CD8-positive, alpha-beta T cell (primary cell): ENCODE measurements at regions of chr6 and their contacts with region 1.

Region 1: DNA sequence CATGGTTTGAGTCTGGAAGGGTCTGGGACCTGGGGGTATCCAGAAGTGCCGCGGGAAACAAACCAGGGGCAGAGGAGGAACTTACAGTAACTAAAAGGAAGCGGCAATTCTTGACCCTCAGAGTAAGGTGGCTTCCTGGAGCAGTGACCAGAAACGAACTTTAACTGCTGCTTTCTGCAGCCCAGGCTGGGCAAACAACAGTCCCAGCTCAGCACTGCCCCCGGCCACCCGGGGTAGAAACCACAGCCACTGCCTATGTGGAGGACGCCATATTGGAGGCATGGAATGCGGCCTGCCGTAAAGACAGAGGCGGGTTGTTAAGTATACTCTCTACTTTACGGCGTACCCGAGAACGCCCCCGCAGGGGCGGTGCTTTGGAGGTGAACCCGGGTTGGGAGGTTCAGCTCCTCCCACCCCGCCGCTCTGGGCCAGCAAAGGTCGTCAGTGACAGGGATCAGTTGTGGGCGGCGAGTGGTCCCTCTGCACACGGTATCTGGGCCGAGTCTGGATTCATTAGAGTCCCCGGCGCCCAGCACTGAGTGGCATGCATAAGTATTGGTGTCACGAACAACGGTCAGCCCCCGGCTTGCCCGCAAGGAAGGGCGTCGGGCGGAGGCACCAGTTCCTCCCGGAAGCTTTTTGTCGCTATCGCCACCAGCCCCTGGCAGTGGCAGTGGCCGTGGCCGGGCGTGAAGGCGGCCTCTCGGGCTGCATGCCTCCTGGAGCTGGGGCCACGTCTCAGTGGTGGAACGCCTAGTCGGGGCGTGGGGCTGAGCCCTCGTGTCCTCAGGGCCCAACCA is at the start of gene PDSS2:
- DNase-seq: peak; percentile 93 to 99 (median 96)
- ATAC-seq: peak; percentile 96
- H3K4me3 ChIP-seq: peak within 1 kb of the TSS; percentile 93 to 94
- H3K4me3 Mint-ChIP-seq: peak within 1 kb of the TSS; percentile 98
- H3K27ac ChIP-seq: peak within 1 kb of the TSS; percentile 69 to 82
- H3K27ac Mint-ChIP-seq: peak within 1 kb of the TSS; percentile 98
- H3K4me1 ChIP-seq: peaks cover 14% of the 10 kb centered on the region
- H3K4me1 Mint-ChIP-seq: peaks cover 31% of the 10 kb centered on the region
- H3K27me3 ChIP-seq: no peaks in the 10 kb centered on the region
- H3K27me3 Mint-ChIP-seq: no peaks in the 10 kb centered on the region
- CTCF ChIP-seq: peak; percentile 28
- total RNA-seq, gene PDSS2: 3.7 to 4.7 TPM

Region 2: DNA sequence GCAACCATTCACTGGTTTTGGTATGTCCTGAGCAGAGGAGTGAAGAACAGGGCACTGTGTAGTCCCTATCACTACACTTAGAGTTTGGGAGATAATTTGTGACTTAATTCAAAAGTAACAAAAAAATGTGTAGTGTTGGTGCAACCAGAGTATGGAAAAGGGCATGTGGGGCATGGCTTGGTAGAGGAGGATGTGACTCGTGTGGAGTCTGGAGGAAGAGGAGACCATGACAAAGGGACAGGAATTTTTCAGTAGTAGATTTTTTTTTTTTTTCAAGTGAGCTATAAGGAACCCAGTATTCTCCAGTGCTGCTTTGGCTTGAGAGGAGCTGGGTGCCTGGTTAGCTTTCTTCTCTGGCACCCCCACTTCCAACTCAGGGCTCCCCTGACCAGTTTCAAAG is 426.4 kb before region 1 on chr6:
- CTCF ChIA-PET with region 1: no interaction called
- POLR2A ChIA-PET with region 1: no interaction called
- intact Hi-C with region 1: loop called (anchors 1 kb)
- DNase-seq: no peak
- ATAC-seq: no peak
- H3K4me3 ChIP-seq: no peak overlapping the region
- H3K4me3 Mint-ChIP-seq: no peak overlapping the region
- H3K27ac ChIP-seq: no peak overlapping the region
- H3K27ac Mint-ChIP-seq: no peak overlapping the region
- H3K4me1 ChIP-seq: peaks cover 10% of the 10 kb centered on the region
- H3K4me1 Mint-ChIP-seq: peaks cover 45% of the 10 kb centered on the region
- H3K27me3 ChIP-seq: no peaks in the 10 kb centered on the region
- H3K27me3 Mint-ChIP-seq: no peaks in the 10 kb centered on the region
- CTCF ChIP-seq: no peak

Region 3: GRCh38 chr6:107489636-107490565 is 30.4 kb after region 1 on chr6 and contains the start of gene SOBP:
- CTCF ChIA-PET with region 1: no interaction called
- POLR2A ChIA-PET with region 1: interaction called, 5 read pairs
- intact Hi-C with region 1: loop called (anchors 1 to 2 kb)
- DNase-seq: peak in 8 of 9 experiments; percentile 9 to 72 (median 56)
- ATAC-seq: peak; percentile 63
- H3K4me3 ChIP-seq: peak within 1 kb of the TSS; percentile 58 to 68
- H3K4me3 Mint-ChIP-seq: peak within 1 kb of the TSS; percentile 90
- H3K27ac ChIP-seq: no peak within 1 kb of the TSS
- H3K27ac Mint-ChIP-seq: no peak within 1 kb of the TSS
- H3K4me1 ChIP-seq: peaks cover 28% of the 10 kb centered on the region
- H3K4me1 Mint-ChIP-seq: peaks cover 18% of the 10 kb centered on the region
- H3K27me3 ChIP-seq: peaks cover 44 to 48% of the 10 kb centered on the region in 2 experiments
- H3K27me3 Mint-ChIP-seq: peaks cover 37% of the 10 kb centered on the region
- CTCF ChIP-seq: peak; percentile 16
- total RNA-seq, gene SOBP: 0.19 to 0.44 TPM

Region 4: DNA sequence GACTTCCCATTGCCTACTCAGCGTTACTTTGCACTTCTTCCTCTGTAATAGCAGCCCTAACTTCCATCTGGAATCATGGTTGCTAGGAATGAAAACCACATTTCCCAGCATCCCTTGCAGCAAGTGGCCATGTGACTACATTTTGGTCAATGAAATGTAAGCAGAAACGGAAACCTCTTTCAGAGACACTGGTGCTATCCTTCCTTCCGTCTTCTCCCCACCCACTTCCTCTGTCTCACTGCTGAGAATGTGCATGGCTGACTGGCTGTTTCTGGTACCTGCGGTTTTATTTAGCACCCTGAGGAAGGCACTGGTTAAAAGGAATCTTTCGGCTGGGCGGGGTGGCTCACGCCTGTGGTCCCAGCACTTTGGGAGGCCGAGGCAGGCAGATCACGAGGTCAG is 257.2 kb after region 1 on chr6:
- CTCF ChIA-PET with region 1: no interaction called
- POLR2A ChIA-PET with region 1: no interaction called
- intact Hi-C with region 1: loop called in 1 of 2 experiments (anchors 5 kb)
- DNase-seq: peak; percentile 46 to 95 (median 76)
- ATAC-seq: peak; percentile 85
- H3K4me3 ChIP-seq: no peak overlapping the region
- H3K4me3 Mint-ChIP-seq: peak overlapping the region; percentile 68
- H3K27ac ChIP-seq: peak overlapping the region in 1 of 2 experiments; percentile 79
- H3K27ac Mint-ChIP-seq: peak overlapping the region; percentile 91
- H3K4me1 ChIP-seq: peaks cover 54% of the 10 kb centered on the region
- H3K4me1 Mint-ChIP-seq: peaks cover 77% of the 10 kb centered on the region
- H3K27me3 ChIP-seq: no peaks in the 10 kb centered on the region
- H3K27me3 Mint-ChIP-seq: no peaks in the 10 kb centered on the region
- CTCF ChIP-seq: no peak

Region 5: GRCh38 chr6:108074359-108075144 is 615.1 kb after region 1 on chr6 and contains the start of gene OSTM1:
- CTCF ChIA-PET with region 1: no interaction called
- POLR2A ChIA-PET with region 1: no interaction called
- intact Hi-C with region 1: loop called (anchors 1 to 5 kb)
- DNase-seq: peak; percentile 89 to 97 (median 94)
- ATAC-seq: peak; percentile 96
- H3K4me3 ChIP-seq: peak within 1 kb of the TSS; percentile 98 to 99
- H3K4me3 Mint-ChIP-seq: peak within 1 kb of the TSS; percentile 89
- H3K27ac ChIP-seq: peak within 1 kb of the TSS; percentile 85 to 88
- H3K27ac Mint-ChIP-seq: peak within 1 kb of the TSS; percentile 88
- H3K4me1 ChIP-seq: peaks cover 19% of the 10 kb centered on the region
- H3K4me1 Mint-ChIP-seq: peaks cover 29% of the 10 kb centered on the region
- H3K27me3 ChIP-seq: no peaks in the 10 kb centered on the region
- H3K27me3 Mint-ChIP-seq: peaks cover 2% of the 10 kb centered on the region
- CTCF ChIP-seq: no peak
- total RNA-seq, gene OSTM1: 20.0 to 25.0 TPM

Region 6: GRCh38 chr6:108294727-108295625 is 835.5 kb after region 1 on chr6 and contains the start of gene AFG1L:
- CTCF ChIA-PET with region 1: no interaction called
- POLR2A ChIA-PET with region 1: interaction called, 3 read pairs
- intact Hi-C with region 1: loop called (anchors 2 to 5 kb)
- DNase-seq: peak; percentile 72 to 92 (median 86)
- ATAC-seq: peak; percentile 92
- H3K4me3 ChIP-seq: peak within 1 kb of the TSS; percentile 94 to 96
- H3K4me3 Mint-ChIP-seq: peak within 1 kb of the TSS; percentile 89
- H3K27ac ChIP-seq: peak within 1 kb of the TSS; percentile 94 to 95
- H3K27ac Mint-ChIP-seq: peak within 1 kb of the TSS; percentile 97
- H3K4me1 ChIP-seq: peaks cover 13% of the 10 kb centered on the region
- H3K4me1 Mint-ChIP-seq: peaks cover 26% of the 10 kb centered on the region
- H3K27me3 ChIP-seq: no peaks in the 10 kb centered on the region
- H3K27me3 Mint-ChIP-seq: no peaks in the 10 kb centered on the region
- CTCF ChIP-seq: no peak
- total RNA-seq, gene AFG1L: 3.3 to 4.0 TPM